Activated B cell treated with CpG ODN at 0.5 μM for 24 hours (primary cell): ENCODE measurements at regions of chr2 and their contacts with region 1.

Region 1: GRCh38 chr2:190088917-190089316 is 26.4 kb upstream of the MSTN start:
- DNase-seq: no peak
- ATAC-seq: peak; percentile 60
- H3K4me3 Mint-ChIP-seq: no peak overlapping the region
- H3K27ac Mint-ChIP-seq: no peak overlapping the region
- H3K4me1 Mint-ChIP-seq: no peaks in the 10 kb centered on the region
- H3K27me3 Mint-ChIP-seq: no peaks in the 10 kb centered on the region
- CTCF ChIP-seq: no peak

Region 2: GRCh38 chr2:190017837-190018236 is 71.1 kb before region 1 on chr2:
- CTCF ChIA-PET with region 1: no interaction called
- POLR2A ChIA-PET with region 1: no interaction called
- intact Hi-C with region 1: no loop called
- DNase-seq: no peak
- ATAC-seq: no peak
- H3K4me3 Mint-ChIP-seq: no peak overlapping the region
- H3K27ac Mint-ChIP-seq: no peak overlapping the region
- H3K4me1 Mint-ChIP-seq: no peaks in the 10 kb centered on the region
- H3K27me3 Mint-ChIP-seq: no peaks in the 10 kb centered on the region
- CTCF ChIP-seq: no peak

Region 3: GRCh38 chr2:190121971-190122370 is 33.1 kb after region 1 on chr2:
- CTCF ChIA-PET with region 1: interaction called, 3 read pairs
- POLR2A ChIA-PET with region 1: no interaction called
- intact Hi-C with region 1: loop called (anchors 5 kb)
- DNase-seq: no peak
- ATAC-seq: no peak
- H3K4me3 Mint-ChIP-seq: peak overlapping the region; percentile 3
- H3K27ac Mint-ChIP-seq: no peak overlapping the region
- H3K4me1 Mint-ChIP-seq: peaks cover 28% of the 10 kb centered on the region
- H3K27me3 Mint-ChIP-seq: no peaks in the 10 kb centered on the region
- CTCF ChIP-seq: no peak

Region 4: GRCh38 chr2:190277234-190278112 is 188.6 kb after region 1 on chr2:
- CTCF ChIA-PET with region 1: interaction called, 19 read pairs
- POLR2A ChIA-PET with region 1: interaction called, 3 read pairs
- intact Hi-C with region 1: loop called (anchors 1 kb)
- DNase-seq: no peak
- ATAC-seq: peak; percentile 31
- H3K4me3 Mint-ChIP-seq: no peak overlapping the region
- H3K27ac Mint-ChIP-seq: no peak overlapping the region
- H3K4me1 Mint-ChIP-seq: no peaks in the 10 kb centered on the region
- H3K27me3 Mint-ChIP-seq: no peaks in the 10 kb centered on the region
- CTCF ChIP-seq: no peak

Region 5: DNA sequence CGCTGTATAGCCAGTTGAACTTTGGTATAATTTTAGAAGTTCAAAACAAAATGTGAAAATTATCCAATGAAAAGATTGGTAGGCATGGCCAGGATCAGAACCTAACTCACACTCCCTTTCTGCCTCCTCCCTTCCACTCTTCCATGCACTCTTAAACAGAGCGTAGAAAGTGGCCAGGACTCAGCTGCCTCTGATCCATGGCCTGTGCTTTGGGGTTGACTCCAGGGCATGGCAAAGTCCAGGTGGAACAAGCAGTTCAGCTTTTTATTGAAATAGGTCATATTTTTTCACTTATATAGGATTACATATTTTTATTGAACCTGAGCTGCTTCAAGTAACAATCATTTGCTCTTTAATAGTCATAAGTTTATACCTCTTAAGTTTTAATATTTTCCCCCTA is 280.7 kb after region 1 on chr2:
- CTCF ChIA-PET with region 1: interaction called, 13 read pairs
- POLR2A ChIA-PET with region 1: no interaction called
- intact Hi-C with region 1: loop called (anchors 1 kb)
- DNase-seq: no peak
- ATAC-seq: no peak
- H3K4me3 Mint-ChIP-seq: no peak overlapping the region
- H3K27ac Mint-ChIP-seq: no peak overlapping the region
- H3K4me1 Mint-ChIP-seq: no peaks in the 10 kb centered on the region
- H3K27me3 Mint-ChIP-seq: no peaks in the 10 kb centered on the region
- CTCF ChIP-seq: no peak

Region 6: DNA sequence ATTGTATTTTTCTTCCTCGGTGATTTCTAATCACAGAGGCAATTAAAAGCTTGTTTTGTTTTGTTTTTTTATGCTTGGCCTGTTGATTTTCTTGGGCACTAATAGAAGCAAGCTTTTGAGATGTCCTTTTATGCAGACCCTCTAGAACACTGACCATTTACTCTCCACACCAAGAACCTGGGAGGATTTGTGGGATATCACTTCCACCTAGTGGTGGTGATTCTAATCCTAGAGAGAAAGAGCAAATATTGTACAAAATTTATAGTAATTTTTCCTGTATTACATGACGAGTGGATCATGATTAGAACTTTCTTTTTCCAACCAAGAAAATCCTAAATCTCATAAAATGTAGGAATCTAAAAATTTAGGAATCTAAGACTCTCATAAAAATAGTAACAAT is 422.2 kb after region 1 on chr2:
- CTCF ChIA-PET with region 1: no interaction called
- POLR2A ChIA-PET with region 1: no interaction called
- intact Hi-C with region 1: loop called (anchors 2 kb)
- DNase-seq: no peak
- ATAC-seq: no peak
- H3K4me3 Mint-ChIP-seq: no peak overlapping the region
- H3K27ac Mint-ChIP-seq: no peak overlapping the region
- H3K4me1 Mint-ChIP-seq: peaks cover 19% of the 10 kb centered on the region
- H3K27me3 Mint-ChIP-seq: no peaks in the 10 kb centered on the region
- CTCF ChIP-seq: no peak

Region 7: GRCh38 chr2:190804182-190804795 is 715.4 kb after region 1 on chr2:
- CTCF ChIA-PET with region 1: no interaction called
- POLR2A ChIA-PET with region 1: no interaction called
- intact Hi-C with region 1: loop called (anchors 2 kb)
- DNase-seq: no peak
- ATAC-seq: no peak
- H3K4me3 Mint-ChIP-seq: no peak overlapping the region
- H3K27ac Mint-ChIP-seq: no peak overlapping the region
- H3K4me1 Mint-ChIP-seq: peaks cover 9% of the 10 kb centered on the region
- H3K27me3 Mint-ChIP-seq: no peaks in the 10 kb centered on the region
- CTCF ChIP-seq: no peak